ENCODE measurements at regions of chr12 and their contacts with region 1.

Region 1: DNA sequence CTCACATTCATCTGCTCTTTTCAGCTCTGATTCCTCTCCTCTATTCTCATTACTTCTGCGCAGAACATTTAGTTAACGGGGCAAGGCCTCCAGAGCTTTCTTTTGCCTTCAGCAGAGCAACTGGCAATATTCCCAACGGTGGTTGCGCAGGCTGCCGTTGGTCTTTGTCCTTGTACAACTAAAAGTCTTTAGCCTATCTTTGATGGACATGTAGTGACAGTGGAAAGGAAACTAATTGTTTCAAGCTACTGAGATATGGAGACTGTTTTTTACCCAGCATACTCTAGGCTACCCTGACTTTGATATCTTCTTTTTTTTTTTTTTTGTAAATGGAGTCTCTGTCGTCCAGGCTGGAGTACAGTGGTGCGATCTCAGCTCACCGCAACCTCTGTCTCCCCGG is 12.6 kb downstream of the R3HDM2 start:
- DNase-seq: no peak
- CTCF ChIP-seq: no peak

Region 2: DNA sequence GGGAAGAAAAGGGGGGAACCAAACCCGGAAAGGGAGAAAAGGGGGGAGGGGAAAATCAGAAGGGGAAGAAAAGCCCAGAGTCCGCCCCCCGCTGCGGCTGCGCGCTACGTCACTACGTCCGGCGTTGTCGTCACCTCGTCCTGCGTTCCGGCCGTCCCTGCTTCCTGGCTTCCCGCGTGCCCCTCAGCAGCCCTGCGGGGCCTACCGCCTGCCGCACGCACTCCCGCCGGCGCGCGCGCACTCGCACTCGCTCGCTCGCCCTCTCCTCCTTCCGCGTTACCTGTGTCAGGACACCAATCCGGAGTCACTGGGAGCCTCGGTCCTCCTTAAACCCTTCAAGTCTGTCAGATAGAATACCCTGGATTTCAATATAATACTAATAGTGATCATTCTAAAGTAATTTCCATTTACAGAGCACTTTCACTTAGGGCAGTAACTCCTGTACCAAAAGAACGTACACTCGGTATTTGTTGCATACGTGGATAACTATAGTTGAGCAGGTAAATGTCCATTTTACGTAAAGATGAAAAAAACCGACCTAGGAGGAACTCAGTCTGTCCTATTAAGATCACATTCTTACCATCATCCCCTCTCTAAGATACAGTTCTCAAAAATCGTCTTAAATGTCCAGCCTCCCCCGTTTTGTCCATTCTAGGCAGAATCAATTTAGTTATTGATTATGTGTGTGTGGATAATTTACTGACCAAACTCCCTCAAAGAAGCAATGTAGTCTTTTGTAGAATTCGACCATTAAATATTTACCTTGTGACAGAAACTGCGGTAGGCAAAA is 12.9 kb after region 1 on chr12 and contains the start of gene R3HDM2:
- CTCF ChIA-PET with region 1: interaction called, 11 read pairs
- POLR2A ChIA-PET with region 1: no interaction called
- DNase-seq: peak; percentile 97
- CTCF ChIP-seq: no peak

Measured in GM10248 (cell line).